ENCODE measurements at regions of chr6 and their contacts with region 1.

Region 1: DNA sequence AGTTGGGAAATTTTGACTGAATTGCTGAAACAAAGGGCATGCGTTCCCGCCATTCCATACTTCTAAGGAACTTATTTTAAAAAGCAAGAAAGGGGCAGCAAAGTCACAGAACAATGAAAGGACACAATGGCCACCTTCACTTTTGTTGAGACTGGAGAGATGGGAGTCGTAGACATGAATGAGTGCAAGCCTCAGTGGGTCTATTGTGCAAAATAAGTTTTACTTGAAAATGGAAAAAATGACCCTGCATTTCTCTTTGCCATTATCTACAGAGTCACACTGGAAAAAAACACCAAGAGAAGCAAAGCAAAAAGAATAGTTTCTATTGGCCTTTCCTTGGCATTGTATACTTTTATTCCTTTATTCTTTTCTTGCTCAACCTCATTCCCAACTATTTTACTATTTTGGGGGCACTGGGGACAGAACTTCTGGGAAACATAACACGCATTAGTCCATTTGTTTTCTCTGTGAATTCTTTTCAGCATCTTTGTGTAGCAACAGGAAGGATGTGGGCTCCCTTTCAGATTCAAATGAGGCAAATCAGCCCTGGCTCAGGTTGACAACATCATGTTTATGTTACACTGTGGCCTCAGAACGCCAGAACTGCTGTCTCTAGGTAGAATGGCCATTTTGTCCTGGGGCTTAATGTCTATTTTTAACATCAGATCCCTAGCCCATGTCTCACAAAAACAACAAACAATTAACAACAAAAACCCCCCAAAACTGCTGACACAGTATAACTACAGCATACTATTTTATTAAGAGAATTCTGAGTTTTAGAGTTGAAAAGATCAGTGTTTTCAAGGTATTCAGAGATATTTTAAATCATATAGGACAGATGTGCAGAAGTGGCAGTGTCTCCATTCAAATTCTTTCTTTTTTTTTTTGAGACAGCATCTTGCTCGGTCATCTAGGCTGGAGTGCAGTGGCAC is 122.2 kb downstream of the FYN start:
- DNase-seq: no peak
- ATAC-seq: peak; percentile 83
- H3K4me3 ChIP-seq: no peak overlapping the region
- H3K27ac ChIP-seq: peak overlapping the region; percentile 85
- H3K4me1 ChIP-seq: peaks cover 69% of the 10 kb centered on the region
- H3K27me3 ChIP-seq: no peaks in the 10 kb centered on the region
- CTCF ChIP-seq: no peak
- EP300 ChIP-seq: peak; percentile 27 to 70; a peak in 2 of 4 replicates
- POLR2A ChIP-seq: no peak
- RAD21 ChIP-seq: peak; percentile 19; the same call in 1 of the 2 replicates

Region 2: GRCh38 chr6:111700135-111700690 is 50.8 kb before region 1 on chr6:
- CTCF ChIA-PET with region 1: no interaction called
- POLR2A ChIA-PET with region 1: no interaction called
- RAD21 ChIA-PET with region 1: no interaction called
- SMC1A ChIA-PET with region 1: no interaction called
- in situ Hi-C with region 1: no loop called
- intact Hi-C with region 1: no loop called
- DNase-seq: no peak
- ATAC-seq: no peak; the same call in 2 of the 3 replicates
- H3K4me3 ChIP-seq: no peak overlapping the region
- H3K27ac ChIP-seq: no peak overlapping the region
- H3K4me1 ChIP-seq: no peaks in the 10 kb centered on the region
- H3K27me3 ChIP-seq: no peaks in the 10 kb centered on the region
- CTCF ChIP-seq: no peak
- EP300 ChIP-seq: no peak
- POLR2A ChIP-seq: no peak
- RAD21 ChIP-seq: no peak

Region 3: GRCh38 chr6:111727802-111728201 is 23.2 kb before region 1 on chr6:
- CTCF ChIA-PET with region 1: interaction called, 16 read pairs
- POLR2A ChIA-PET with region 1: interaction called, 7 read pairs
- RAD21 ChIA-PET with region 1: interaction called, 12 read pairs
- SMC1A ChIA-PET with region 1: interaction called, 181 read pairs
- in situ Hi-C with region 1: no loop called
- intact Hi-C with region 1: no loop called
- DNase-seq: no peak
- ATAC-seq: no peak
- H3K4me3 ChIP-seq: no peak overlapping the region
- H3K27ac ChIP-seq: no peak overlapping the region
- H3K4me1 ChIP-seq: peaks cover 48% of the 10 kb centered on the region
- H3K27me3 ChIP-seq: no peaks in the 10 kb centered on the region
- CTCF ChIP-seq: peak in 2 of 3 experiments; percentile 11 to 38; a peak in 1 of 6 replicates
- EP300 ChIP-seq: no peak
- POLR2A ChIP-seq: no peak
- RAD21 ChIP-seq: no peak

Region 4: GRCh38 chr6:111737065-111737521 is 13.9 kb before region 1 on chr6:
- CTCF ChIA-PET with region 1: interaction called, 12 read pairs
- POLR2A ChIA-PET with region 1: interaction called, 23 read pairs
- RAD21 ChIA-PET with region 1: interaction called, 67 read pairs
- SMC1A ChIA-PET with region 1: interaction called, 75 read pairs
- in situ Hi-C with region 1: no loop called
- intact Hi-C with region 1: loop called (anchors 1 kb)
- DNase-seq: no peak
- ATAC-seq: no peak
- H3K4me3 ChIP-seq: no peak overlapping the region
- H3K27ac ChIP-seq: 0 out of 2 replicates have a peak overlapping the region, but pooled peaks have one; percentile 6
- H3K4me1 ChIP-seq: peaks cover 80% of the 10 kb centered on the region
- H3K27me3 ChIP-seq: no peaks in the 10 kb centered on the region
- CTCF ChIP-seq: no peak
- EP300 ChIP-seq: no peak
- POLR2A ChIP-seq: no peak
- RAD21 ChIP-seq: no peak

Region 5: DNA sequence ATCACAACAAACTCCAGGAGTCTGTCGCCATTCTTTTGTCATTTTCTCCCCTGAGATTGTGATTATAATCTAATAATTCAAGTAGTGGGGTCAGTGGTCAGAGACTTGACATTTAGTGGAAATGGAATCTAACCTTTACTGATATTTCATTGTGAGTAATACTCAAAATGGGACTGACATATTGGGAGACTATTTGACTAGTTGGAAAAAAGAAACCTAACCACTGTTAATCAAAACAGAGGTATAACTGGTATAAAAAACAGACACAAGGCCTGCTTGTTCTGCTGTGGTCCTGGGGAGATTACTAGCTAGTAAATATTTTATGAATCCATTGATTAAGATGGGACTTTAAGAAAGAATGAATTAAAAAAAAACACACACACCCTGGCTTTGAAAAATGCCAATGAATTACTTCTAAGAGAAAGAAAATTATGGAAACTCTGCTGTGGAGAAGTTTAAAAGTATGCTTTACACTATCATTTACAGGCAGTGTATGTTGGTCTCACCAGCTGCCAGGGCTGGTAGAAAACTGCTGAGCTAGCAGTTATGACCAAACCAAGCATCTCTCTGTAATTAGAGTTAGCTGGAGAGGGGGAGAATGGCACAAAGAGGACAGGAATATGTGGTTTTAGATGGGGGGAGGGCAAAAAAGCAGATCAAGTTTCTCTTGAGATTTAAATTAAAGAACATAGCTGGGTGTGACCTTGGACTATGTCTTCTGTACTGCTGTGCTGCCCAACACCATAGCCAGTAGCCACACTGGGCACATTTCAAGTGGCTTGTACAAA is 18.5 kb after region 1 on chr6:
- CTCF ChIA-PET with region 1: interaction called, 62 read pairs
- POLR2A ChIA-PET with region 1: interaction called, 56 read pairs
- RAD21 ChIA-PET with region 1: interaction called, 158 read pairs
- SMC1A ChIA-PET with region 1: interaction called, 156 read pairs
- in situ Hi-C with region 1: no loop called
- intact Hi-C with region 1: loop called (anchors 1 kb)
- DNase-seq: no peak
- ATAC-seq: no peak
- H3K4me3 ChIP-seq: no peak overlapping the region
- H3K27ac ChIP-seq: peak overlapping the region; percentile 93
- H3K4me1 ChIP-seq: peaks cover 57% of the 10 kb centered on the region
- H3K27me3 ChIP-seq: no peaks in the 10 kb centered on the region
- CTCF ChIP-seq: no peak
- EP300 ChIP-seq: no peak
- POLR2A ChIP-seq: no peak
- RAD21 ChIP-seq: no peak

Region 6: GRCh38 chr6:111793711-111794111 is 42.7 kb after region 1 on chr6:
- CTCF ChIA-PET with region 1: interaction called, 4 read pairs
- POLR2A ChIA-PET with region 1: interaction called, 5 read pairs
- RAD21 ChIA-PET with region 1: interaction called, 12 read pairs
- SMC1A ChIA-PET with region 1: interaction called, 13 read pairs
- in situ Hi-C with region 1: no loop called
- intact Hi-C with region 1: no loop called
- DNase-seq: no peak
- ATAC-seq: peak; percentile 82
- H3K4me3 ChIP-seq: peak overlapping the region; percentile 66
- H3K27ac ChIP-seq: peak overlapping the region; percentile 85
- H3K4me1 ChIP-seq: peaks cover 36% of the 10 kb centered on the region
- H3K27me3 ChIP-seq: no peaks in the 10 kb centered on the region
- CTCF ChIP-seq: no peak
- EP300 ChIP-seq: no peak
- POLR2A ChIP-seq: peak; percentile 56
- RAD21 ChIP-seq: no peak